ENCODE measurements at regions of chr6 and their contacts with region 1.

Region 1: GRCh38 chr6:57021086-57021720 is 25.3 kb upstream of the KIAA1586 start:
- DNase-seq: no peak
- ATAC-seq: peak in 3 of 4 donors; percentile 61 to 79 (median 61)
- H3K4me3 ChIP-seq: no peak overlapping the region
- H3K27ac ChIP-seq: no peak overlapping the region
- H3K4me1 ChIP-seq: no peaks in the 10 kb centered on the region
- H3K27me3 ChIP-seq: no peaks in the 10 kb centered on the region
- CTCF ChIP-seq: peak; percentile 64

Region 2: DNA sequence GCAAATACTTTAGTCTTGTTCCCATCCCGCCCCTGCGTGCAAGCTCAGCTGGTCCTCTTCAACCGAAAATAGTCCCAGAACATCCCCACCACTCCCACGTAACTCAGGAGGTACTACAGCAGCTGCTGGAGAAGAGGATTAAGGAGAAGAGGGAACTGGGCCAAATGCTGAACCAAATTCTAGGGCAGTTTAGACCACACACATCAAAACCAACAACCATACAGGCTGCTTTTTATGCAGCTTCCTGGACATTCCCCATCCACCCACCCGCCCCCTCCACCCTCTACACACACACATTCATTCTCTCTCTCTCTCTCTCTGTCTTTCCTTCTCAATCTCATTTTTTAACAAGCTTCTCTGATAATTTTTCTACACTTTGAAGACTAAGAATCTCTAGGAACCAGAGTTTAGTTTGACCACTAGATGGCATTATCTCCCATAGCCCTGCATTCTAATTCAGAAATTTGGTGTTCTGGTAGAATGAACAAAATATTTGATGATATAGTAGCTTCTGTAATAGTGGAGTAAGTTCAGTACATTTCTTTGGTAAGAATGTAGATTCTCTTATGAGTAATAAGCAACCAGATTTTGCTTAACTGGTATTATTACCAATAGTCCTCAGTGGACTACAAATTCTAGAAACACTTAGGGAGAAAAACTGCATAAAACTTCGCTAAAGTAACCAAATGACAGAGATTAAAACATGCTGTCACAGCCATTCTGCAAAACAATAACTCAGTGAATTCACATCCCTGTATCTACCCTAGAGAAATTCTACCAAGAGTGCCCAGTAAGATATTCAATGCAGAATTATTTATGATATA is 118.3 kb before region 1 on chr6:
- intact Hi-C with region 1: loop called in 1 of 2 experiments (anchors 2 kb)
- DNase-seq: no peak
- ATAC-seq: peak in 2 of 4 donors; percentile 42 to 56
- H3K4me3 ChIP-seq: peak overlapping the region; percentile 2
- H3K27ac ChIP-seq: no peak overlapping the region
- H3K4me1 ChIP-seq: no peaks in the 10 kb centered on the region
- H3K27me3 ChIP-seq: no peaks in the 10 kb centered on the region
- CTCF ChIP-seq: peak; percentile 72

Region 3: DNA sequence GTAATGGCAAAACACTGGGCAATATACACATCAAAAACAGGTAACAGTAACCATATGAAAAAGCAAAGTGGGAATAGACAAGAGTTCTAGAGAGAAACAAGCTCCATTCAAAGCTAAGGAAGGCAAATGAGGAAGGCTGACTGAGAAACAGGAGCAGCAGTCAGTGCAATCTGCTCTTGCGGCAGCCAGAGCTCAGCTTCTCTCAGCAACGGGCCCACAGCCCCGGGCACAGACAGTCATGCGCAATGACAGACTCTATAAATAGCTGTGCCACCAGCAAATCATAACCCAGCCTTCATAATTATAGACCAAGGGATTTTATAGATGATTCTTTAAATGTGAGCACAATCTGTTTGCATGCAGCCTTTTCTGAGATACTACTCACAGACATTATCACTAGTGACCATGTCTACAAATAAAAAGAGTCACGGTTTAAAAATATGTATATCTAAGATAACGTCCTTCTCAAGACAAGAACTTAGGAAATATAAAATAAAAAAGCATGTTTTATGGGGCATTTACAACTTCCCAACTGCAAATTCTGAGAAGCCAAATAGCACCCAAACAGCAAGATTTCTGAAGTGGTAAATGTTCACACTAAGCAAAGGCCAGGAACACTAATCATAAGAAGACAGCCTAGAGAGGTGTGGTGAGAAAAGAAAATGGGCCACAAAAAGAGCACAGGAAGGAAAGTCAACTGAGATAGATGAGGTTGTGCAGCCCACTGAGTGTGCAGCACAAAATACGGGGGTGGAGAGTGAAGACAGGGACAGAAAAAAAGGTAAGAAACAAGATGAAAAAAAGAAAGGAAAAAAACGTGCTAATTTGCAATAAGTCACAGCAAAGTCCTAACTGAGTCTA is 106.2 kb before region 1 on chr6:
- intact Hi-C with region 1: loop called in 1 of 2 experiments (anchors 5 kb)
- DNase-seq: peak; percentile 24 to 64
- ATAC-seq: peak; percentile 88 to 97 (median 94)
- H3K4me3 ChIP-seq: no peak overlapping the region
- H3K27ac ChIP-seq: peak overlapping the region; percentile 11
- H3K4me1 ChIP-seq: peaks cover 6% of the 10 kb centered on the region
- H3K27me3 ChIP-seq: no peaks in the 10 kb centered on the region
- CTCF ChIP-seq: no peak

Region 4: DNA sequence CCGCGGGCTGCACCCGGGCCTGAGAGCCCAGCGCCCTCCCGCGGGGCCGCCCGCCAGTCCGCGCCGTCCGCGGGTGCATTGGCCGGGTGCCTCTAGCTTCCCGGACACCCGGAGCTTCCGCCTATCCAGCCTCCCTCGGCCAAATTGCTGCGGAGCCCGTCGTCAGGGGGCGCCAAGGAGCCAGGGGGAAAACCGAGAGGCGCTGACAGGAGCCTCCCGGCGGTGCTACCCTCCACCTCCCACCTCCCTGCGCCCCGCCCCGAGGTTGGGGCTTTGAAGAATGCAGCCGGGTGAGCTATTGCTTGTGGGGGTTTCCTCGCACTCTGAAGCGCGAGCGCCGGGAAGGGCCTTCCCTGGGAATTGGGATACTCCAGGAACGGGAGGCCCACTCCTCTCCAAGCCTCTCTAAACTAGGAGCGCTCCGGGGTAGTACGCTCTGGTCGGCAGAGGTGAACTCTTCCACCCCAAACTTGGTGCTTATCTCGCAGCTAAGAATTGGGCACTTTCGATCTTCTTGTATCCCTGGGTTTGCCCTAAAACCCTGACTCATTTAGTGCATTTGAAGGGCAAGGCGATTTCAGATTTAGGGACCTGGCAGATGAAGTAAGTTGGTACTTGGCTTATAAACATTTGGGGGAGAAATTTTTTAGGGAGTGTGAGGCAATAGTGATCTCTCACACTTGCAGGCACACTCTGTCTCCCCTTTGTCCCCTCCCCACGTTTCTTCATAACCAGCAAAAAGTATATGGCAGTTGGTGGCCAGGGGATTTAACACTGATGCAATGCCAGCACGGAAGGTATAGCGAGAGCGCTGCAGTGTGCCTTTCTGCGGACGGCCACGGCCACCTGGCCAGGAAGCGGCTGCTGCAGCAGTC is 65.8 kb before region 1 on chr6:
- intact Hi-C with region 1: loop called in 1 of 2 experiments (anchors 5 kb)
- DNase-seq: peak; percentile 81 to 90
- ATAC-seq: peak; percentile 84 to 97 (median 90)
- H3K4me3 ChIP-seq: peak overlapping the region; percentile 72
- H3K27ac ChIP-seq: peak overlapping the region; percentile 32
- H3K4me1 ChIP-seq: peaks cover 7% of the 10 kb centered on the region
- H3K27me3 ChIP-seq: no peaks in the 10 kb centered on the region
- CTCF ChIP-seq: peak; percentile 69

Region 5: DNA sequence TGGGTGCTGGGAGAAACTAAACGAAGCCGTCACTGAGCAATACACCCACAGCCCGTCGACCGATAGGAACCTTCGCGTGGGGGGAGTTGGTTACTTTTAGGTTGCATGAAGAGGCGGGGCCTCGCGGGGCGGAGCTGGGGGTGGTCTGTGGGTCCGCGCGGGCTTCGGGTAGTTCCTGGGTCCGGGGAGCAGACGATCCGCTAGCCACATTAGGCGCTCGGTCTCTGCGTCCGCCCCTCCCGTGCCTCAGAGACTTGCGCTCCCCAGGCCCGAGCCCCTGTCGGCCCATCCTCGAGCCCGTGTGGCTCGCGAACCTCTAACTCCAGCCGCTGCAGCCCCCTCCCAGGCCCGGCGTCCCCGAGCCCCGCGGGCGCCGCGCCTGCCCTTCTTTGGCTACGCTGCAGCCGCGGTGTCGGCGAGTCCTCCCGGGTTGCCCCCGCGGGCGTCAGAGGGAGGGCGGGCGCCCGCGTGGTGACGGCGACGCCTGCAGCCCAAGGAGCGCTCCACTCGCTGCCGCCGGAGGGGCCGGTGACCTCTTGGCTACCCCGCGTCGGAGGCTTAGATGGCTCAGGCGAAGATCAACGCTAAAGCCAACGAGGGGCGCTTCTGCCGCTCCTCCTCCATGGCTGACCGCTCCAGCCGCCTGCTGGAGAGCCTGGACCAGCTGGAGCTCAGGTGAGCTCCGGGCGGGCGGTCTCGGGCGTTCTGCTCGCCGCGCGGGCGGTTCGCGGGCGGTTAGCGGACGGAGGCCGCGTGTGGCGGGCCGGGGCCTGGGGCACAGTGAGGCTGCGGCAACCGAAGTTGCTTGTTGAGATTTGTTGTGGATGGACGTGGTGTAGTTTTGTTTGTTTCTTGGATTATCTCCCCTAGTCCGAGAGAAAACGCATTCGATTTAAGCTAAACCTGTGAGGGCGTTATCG is 151.2 kb after region 1 on chr6 and contains the start of gene BAG2:
- intact Hi-C with region 1: no loop called
- DNase-seq: peak; percentile 90 to 94
- ATAC-seq: peak; percentile 96 to 98 (median 96)
- H3K4me3 ChIP-seq: peak within 1 kb of the TSS; percentile 89
- H3K27ac ChIP-seq: peak within 1 kb of the TSS; percentile 93
- H3K4me1 ChIP-seq: peaks cover 12% of the 10 kb centered on the region
- H3K27me3 ChIP-seq: no peaks in the 10 kb centered on the region
- CTCF ChIP-seq: peak; percentile 38
- total RNA-seq, gene BAG2: 7.3 to 9.3 (median 8.5) TPM

Region 6: DNA sequence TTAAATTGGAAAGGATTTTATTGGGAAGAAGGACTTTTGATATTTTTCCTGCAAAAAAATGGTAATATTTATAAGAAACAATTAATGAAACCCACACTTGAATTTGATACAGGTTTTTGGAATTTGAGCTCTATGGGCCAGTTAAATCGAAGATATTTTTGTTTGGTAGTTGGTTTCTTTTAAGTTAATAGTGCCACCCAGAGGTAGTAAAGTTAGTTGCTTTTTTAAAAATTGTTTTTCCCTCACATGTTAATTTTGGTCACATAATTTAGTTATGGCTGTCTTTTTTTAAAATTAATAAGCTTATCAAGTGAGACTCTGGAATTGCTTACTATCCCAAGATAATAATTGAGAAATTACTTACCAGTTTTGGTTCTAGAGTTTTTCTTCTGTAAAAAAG is 303.3 kb after region 1 on chr6:
- intact Hi-C with region 1: loop called in 1 of 2 experiments (anchors 10 kb)
- DNase-seq: no peak
- ATAC-seq: no peak
- H3K4me3 ChIP-seq: no peak overlapping the region
- H3K27ac ChIP-seq: no peak overlapping the region
- H3K4me1 ChIP-seq: no peaks in the 10 kb centered on the region
- H3K27me3 ChIP-seq: no peaks in the 10 kb centered on the region
- CTCF ChIP-seq: peak; percentile 54

Measured in psoas muscle (tissue), 8 donors.